ENCODE measurements at regions of chr10 and their contacts with region 1.

Region 1: GRCh38 chr10:62244780-62245467 is 23.7 kb downstream of the RTKN2 start:
- DNase-seq: peak; percentile 70
- H3K4me3 ChIP-seq: peak overlapping the region in 2 of 3 experiments; percentile 14 to 69
- H3K27ac ChIP-seq: peak overlapping the region; percentile 84
- H3K4me1 ChIP-seq: peaks cover 18% of the 10 kb centered on the region
- H3K27me3 ChIP-seq: no peaks in the 10 kb centered on the region
- CTCF ChIP-seq: peak; percentile 85 to 96

Region 2: GRCh38 chr10:61750929-61751471 is 493.9 kb before region 1 on chr10:
- CTCF ChIA-PET with region 1: interaction called, 23 read pairs
- dilution Hi-C with region 1: no loop called
- in situ Hi-C with region 1: loop called in 1 of 2 experiments (anchors 25 kb)
- intact Hi-C with region 1: loop called (anchors 1 kb)
- DNase-seq: peak; percentile 59
- H3K4me3 ChIP-seq: no peak overlapping the region
- H3K27ac ChIP-seq: no peak overlapping the region
- H3K4me1 ChIP-seq: peaks cover 29% of the 10 kb centered on the region
- H3K27me3 ChIP-seq: no peaks in the 10 kb centered on the region
- CTCF ChIP-seq: peak; percentile 90 to 95

Region 3: GRCh38 chr10:61961278-61961677 is 283.6 kb before region 1 on chr10:
- CTCF ChIA-PET with region 1: no interaction called
- dilution Hi-C with region 1: no loop called
- in situ Hi-C with region 1: no loop called
- intact Hi-C with region 1: no loop called
- DNase-seq: no peak
- H3K4me3 ChIP-seq: no peak overlapping the region
- H3K27ac ChIP-seq: no peak overlapping the region
- H3K4me1 ChIP-seq: no peaks in the 10 kb centered on the region
- H3K27me3 ChIP-seq: no peaks in the 10 kb centered on the region
- CTCF ChIP-seq: no peak

Region 4: DNA sequence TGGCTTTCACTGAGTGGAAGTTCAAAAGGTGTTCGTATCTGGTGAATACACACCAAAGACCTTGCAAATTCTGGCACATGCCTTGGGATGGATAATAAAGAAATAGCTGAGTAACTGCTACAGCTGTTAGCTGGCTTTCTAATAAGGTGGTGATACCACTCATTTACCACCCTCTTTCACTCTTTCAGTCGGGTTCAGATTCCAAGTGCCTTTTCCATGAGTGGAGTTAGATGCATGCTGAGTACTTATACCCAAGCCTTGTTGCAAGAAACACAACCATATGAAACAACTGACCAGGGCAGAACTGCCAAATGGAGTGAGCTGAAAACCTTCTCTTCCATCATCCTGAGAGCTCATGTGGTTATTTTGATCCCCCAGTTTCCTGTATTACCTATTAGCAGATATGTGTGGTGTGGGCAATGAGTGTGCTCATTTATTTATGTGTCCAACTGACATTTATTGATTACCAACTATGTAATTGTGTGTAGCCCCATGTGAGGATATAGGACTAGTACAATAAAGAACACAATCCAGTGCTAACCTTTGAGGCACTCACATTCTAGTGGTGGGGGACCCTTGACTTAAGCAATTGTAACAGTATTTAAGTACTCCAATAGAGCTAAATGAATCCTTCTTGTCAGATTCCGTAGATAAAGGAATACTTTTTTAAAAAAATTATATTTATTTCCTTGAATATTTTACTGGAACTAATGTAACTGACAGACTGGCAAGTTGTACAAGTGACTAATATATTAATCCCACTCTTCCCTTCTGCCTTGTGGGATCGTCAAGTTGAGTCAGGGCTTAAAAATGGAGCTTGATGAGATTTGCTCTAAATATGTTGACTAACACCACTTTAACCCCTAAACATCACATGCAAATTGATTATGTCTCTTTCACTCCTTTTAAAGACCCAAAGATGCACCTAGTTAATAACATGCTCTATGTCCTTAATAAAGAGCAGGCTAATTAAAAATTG is 218.7 kb before region 1 on chr10:
- CTCF ChIA-PET with region 1: no interaction called
- dilution Hi-C with region 1: no loop called
- in situ Hi-C with region 1: loop called in 1 of 2 experiments (anchors 5 kb)
- intact Hi-C with region 1: no loop called
- DNase-seq: peak; percentile 82
- H3K4me3 ChIP-seq: no peak overlapping the region
- H3K27ac ChIP-seq: peak overlapping the region; percentile 92
- H3K4me1 ChIP-seq: peaks cover 49% of the 10 kb centered on the region
- H3K27me3 ChIP-seq: no peaks in the 10 kb centered on the region
- CTCF ChIP-seq: no peak

Region 5: GRCh38 chr10:62050893-62051433 is 194.0 kb before region 1 on chr10:
- CTCF ChIA-PET with region 1: interaction called, 6 read pairs
- dilution Hi-C with region 1: no loop called
- in situ Hi-C with region 1: loop called in 1 of 2 experiments (anchors 5 kb)
- intact Hi-C with region 1: no loop called
- DNase-seq: peak; percentile 90
- H3K4me3 ChIP-seq: peak overlapping the region; percentile 46 to 53 (median 47)
- H3K27ac ChIP-seq: peak overlapping the region; percentile 94
- H3K4me1 ChIP-seq: peaks cover 38% of the 10 kb centered on the region
- H3K27me3 ChIP-seq: no peaks in the 10 kb centered on the region
- CTCF ChIP-seq: no peak

Region 6: GRCh38 chr10:62076891-62077290 is 168.0 kb before region 1 on chr10:
- CTCF ChIA-PET with region 1: no interaction called
- dilution Hi-C with region 1: no loop called
- in situ Hi-C with region 1: no loop called
- intact Hi-C with region 1: loop called (anchors 2 kb)
- DNase-seq: peak; percentile 89
- H3K4me3 ChIP-seq: no peak overlapping the region
- H3K27ac ChIP-seq: peak overlapping the region; percentile 64
- H3K4me1 ChIP-seq: peaks cover 28% of the 10 kb centered on the region
- H3K27me3 ChIP-seq: no peaks in the 10 kb centered on the region
- CTCF ChIP-seq: no peak

Region 7: DNA sequence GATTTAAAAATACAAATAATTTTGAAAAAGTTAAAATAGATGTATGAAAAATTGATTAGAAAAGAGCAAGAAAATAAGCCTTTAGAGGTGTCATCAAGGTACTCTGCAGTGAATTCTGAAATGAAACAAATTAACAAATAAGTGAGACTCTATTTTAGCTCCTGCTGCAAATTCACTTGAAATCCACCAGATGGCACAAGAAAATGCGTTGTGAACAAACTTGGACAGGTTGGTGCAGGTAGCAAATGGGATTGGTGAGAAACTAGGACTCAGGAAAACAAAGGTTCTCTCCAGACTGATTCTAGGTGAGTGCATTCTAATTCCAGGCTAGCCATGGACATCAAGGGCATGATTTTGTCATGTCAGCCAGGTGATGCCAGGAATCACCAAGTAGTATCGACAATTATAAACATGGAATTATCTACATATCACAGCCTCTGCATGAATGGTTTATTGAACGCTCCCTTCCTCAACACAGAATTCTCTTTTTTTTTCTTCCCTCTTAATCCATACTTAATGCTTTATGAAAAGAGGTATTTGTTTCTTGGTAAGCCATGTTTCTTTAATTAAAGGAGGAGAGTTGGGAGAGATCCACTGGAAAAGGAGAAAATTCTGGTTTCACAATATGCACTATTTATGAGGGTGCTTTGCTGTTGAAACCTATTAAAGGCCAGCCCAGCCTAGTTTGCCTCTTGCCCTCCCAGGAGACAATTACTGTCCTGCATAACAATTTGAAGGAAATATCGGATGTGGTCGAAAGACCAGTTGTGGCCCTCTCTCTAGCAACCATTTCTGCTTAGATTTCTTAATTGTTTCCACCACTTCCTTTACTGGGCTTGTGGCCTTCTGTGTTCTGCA is 247.3 kb after region 1 on chr10:
- CTCF ChIA-PET with region 1: no interaction called
- dilution Hi-C with region 1: no loop called
- in situ Hi-C with region 1: no loop called
- intact Hi-C with region 1: loop called (anchors 5 kb)
- DNase-seq: peak; percentile 72
- H3K4me3 ChIP-seq: no peak overlapping the region
- H3K27ac ChIP-seq: peak overlapping the region; percentile 55
- H3K4me1 ChIP-seq: peaks cover 10% of the 10 kb centered on the region
- H3K27me3 ChIP-seq: no peaks in the 10 kb centered on the region
- CTCF ChIP-seq: peak; percentile 80 to 87